Esophagus muscularis mucosa (tissue), 4 donors: ENCODE measurements at regions of chr6 and their contacts with region 1.

Region 1: DNA sequence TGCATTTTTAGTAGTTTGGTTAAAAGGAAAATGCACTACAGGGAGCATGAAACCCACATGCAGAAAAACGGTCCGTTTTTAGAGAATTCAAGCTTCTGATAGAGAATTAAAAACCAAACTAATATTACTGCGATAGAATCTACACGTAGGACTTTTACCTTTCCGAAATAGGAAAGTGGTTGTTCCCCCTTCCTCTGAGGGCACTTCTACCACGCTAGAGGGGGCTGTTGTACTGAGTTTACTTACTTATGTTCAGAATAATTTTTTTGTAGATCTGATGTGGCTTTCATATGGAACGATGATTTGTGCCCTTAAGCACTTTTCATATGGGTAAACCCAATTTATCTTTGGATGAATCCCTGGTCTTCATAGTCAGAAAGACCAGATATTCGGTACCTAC is 264.3 kb upstream of the PLN start:
- DNase-seq: no peak
- H3K4me3 ChIP-seq: peak overlapping the region in 2 of 4 donors; percentile 7 to 11
- H3K27ac ChIP-seq: no peak overlapping the region
- H3K4me1 ChIP-seq: peaks cover 11 to 39% (median 26%) of the 10 kb centered on the region in 4 donors
- H3K27me3 ChIP-seq: no peaks in the 10 kb centered on the region
- CTCF ChIP-seq: peak; percentile 77 to 78 (median 78)
- EP300 ChIP-seq: no peak
- POLR2A ChIP-seq: no peak

Region 2: GRCh38 chr6:118509009-118509617 is 225.3 kb after region 1 on chr6:
- intact Hi-C with region 1: loop called (anchors 1 kb)
- DNase-seq: no peak
- H3K4me3 ChIP-seq: no peak overlapping the region
- H3K27ac ChIP-seq: no peak overlapping the region
- H3K4me1 ChIP-seq: peaks cover 0 to 6% (median 4%) of the 10 kb centered on the region in 4 donors
- H3K27me3 ChIP-seq: no peaks in the 10 kb centered on the region
- CTCF ChIP-seq: peak; percentile 64 to 76 (median 75)
- EP300 ChIP-seq: no peak
- POLR2A ChIP-seq: no peak

Region 3: GRCh38 chr6:118551063-118552053 is 267.6 kb after region 1 on chr6:
- intact Hi-C with region 1: loop called (anchors 2 kb)
- DNase-seq: no peak
- H3K4me3 ChIP-seq: peak overlapping the region; percentile 43 to 59 (median 50)
- H3K27ac ChIP-seq: peak overlapping the region; percentile 61 to 74 (median 71)
- H3K4me1 ChIP-seq: peaks cover 0 to 53% (median 37%) of the 10 kb centered on the region in 4 donors
- H3K27me3 ChIP-seq: no peaks in the 10 kb centered on the region
- CTCF ChIP-seq: peak; percentile 64 to 72 (median 68)
- EP300 ChIP-seq: no peak
- POLR2A ChIP-seq: no peak

Region 4: GRCh38 chr6:118580585-118581419 is 297.0 kb after region 1 on chr6:
- intact Hi-C with region 1: loop called (anchors 2 kb)
- DNase-seq: no peak
- H3K4me3 ChIP-seq: no peak overlapping the region
- H3K27ac ChIP-seq: peak overlapping the region in 2 of 4 donors; percentile 10 to 40
- H3K4me1 ChIP-seq: peaks cover 9 to 17% (median 15%) of the 10 kb centered on the region in 4 donors
- H3K27me3 ChIP-seq: no peaks in the 10 kb centered on the region
- CTCF ChIP-seq: peak; percentile 65 to 78 (median 75)
- EP300 ChIP-seq: no peak
- POLR2A ChIP-seq: no peak

Region 5: DNA sequence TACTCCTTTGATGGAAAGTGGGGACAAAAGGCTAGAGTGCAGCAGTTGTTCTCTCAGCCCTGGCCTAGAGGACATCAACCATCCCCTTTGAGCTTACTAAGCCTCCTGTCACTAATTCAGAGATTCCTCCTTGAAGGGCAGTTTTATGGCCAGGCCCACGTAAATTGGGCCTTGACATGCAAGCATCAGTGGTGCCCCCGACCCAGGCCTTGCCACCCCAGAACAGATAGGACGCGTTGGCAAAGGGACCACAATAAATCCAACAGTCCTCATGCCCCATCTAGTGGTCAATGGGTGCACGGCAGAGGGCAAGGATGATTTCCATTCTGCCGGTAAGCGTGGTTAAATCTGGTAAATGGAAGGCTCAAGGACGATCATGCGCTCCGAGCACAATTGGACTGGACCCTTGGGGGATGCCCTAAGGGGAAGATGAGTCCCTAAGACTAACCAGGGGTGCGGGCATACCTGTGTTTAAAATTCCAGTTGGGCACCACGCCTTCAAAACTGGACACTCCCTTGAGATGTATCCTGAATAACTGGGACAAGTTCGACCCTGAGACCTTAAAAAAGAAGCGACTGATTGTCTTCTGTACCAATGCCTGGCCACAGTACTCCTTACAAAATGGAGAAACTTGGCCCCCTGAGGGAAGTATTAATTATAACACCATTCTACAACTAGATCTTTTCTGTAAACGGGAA is 335.1 kb after region 1 on chr6:
- intact Hi-C with region 1: loop called (anchors 10 kb)
- DNase-seq: no peak
- H3K4me3 ChIP-seq: no peak overlapping the region
- H3K27ac ChIP-seq: no peak overlapping the region
- H3K4me1 ChIP-seq: peaks cover 10 to 36% (median 18%) of the 10 kb centered on the region in 4 donors
- H3K27me3 ChIP-seq: no peaks in the 10 kb centered on the region
- CTCF ChIP-seq: peak in 2 of 3 experiments; percentile 81 to 85
- EP300 ChIP-seq: no peak
- POLR2A ChIP-seq: no peak

Region 6: DNA sequence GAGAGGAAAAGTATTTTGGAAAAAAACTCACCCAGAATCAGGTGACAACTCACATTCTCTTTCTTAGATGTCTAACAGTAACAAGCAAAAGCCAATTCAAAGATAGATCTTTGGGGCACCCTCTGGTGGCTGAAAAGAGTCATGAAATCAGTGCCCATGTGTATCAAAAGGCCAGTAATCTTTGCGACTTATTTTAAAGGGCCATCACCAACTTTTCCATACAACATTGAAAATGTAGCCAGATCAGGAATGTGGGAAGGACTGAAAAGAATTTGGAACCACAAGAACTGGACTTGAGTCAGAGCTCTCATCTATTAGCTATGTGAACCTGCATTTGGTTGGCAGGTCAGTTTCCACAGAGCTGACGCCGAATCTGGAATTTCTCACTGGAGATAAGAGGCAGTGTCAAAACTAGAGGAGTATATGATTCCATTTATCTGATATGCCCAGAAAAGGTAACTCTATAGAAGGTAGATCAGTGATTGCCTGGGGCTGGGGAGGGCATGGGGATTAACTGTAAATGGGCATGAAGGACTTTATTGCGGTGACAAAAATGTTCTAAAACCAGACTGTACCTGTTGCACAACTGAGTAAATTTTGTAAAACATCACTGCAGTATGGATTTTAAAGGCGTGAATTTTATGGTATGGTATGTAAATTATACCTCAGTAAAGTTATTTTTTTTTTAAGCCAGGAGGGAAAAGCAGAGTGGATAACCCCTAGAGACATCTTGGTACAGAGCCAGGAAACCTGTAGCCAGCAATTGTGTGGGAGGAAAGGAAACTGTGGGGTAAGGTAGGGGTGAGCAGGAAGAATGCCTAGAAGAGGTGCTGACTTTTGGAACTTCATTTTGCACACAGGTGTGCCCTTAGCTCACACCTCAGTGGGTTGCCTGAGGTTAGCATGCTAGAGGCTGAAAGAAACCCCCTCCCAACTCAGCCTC is 493.1 kb after region 1 on chr6:
- intact Hi-C with region 1: loop called (anchors 5 kb)
- DNase-seq: no peak
- H3K4me3 ChIP-seq: no peak overlapping the region
- H3K27ac ChIP-seq: no peak overlapping the region
- H3K4me1 ChIP-seq: peaks cover 5 to 9% (median 7%) of the 10 kb centered on the region in 4 donors
- H3K27me3 ChIP-seq: no peaks in the 10 kb centered on the region
- CTCF ChIP-seq: peak; percentile 64 to 76 (median 65)
- EP300 ChIP-seq: no peak
- POLR2A ChIP-seq: no peak